ENCODE measurements at regions of chr5 and their contacts with region 1.

Region 1: GRCh38 chr5:169701910-169702451 is 64.9 kb downstream of the DOCK2 start:
- DNase-seq: no peak
- H3K4me3 ChIP-seq: no peak overlapping the region
- H3K27ac ChIP-seq: peak overlapping the region in 1 of 59 donors; percentile 59
- H3K27me3 ChIP-seq: peaks cover 0 to 3% (median 0%) of the 10 kb centered on the region in 45 donors
- CTCF ChIP-seq: peak in 55 of 56 donors; percentile 17 to 84 (median 66)

Region 2: DNA sequence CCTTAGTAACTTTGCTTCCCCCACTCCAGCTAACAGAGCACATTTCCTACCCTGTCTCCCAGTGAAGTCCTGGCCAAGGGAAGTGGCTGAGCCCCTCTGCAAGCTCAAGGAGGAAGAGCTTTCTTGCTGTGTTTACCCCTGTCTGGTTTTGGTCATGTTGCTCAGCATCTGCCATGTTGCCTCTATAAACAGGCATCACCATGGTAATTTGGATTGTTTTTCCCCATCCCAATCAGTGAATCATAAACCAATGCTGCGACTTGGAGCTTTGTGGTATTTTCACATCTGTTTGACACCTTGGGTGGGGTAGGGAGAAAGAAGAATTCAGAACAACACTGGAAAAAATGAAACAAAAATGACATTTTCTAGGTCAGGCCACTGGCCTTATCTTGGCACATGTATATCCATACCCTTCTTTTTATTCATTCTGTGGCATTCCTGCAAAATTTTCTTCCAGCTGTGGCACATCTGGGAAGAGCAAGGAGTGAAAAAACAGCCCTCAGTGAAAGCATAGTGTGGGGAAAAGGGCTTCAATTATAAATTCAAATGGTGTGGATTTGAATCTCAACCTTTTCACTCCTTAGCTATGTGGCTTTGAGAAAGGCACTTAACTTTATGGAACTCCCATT is 443.5 kb before region 1 on chr5:
- intact Hi-C with region 1: no loop called
- DNase-seq: no peak
- H3K4me3 ChIP-seq: no peak overlapping the region
- H3K27ac ChIP-seq: no peak overlapping the region
- H3K27me3 ChIP-seq: peaks cover 0 to 5% (median 0%) of the 10 kb centered on the region in 45 donors
- CTCF ChIP-seq: no peak

Region 3: GRCh38 chr5:169367861-169368260 is 334.1 kb before region 1 on chr5:
- intact Hi-C with region 1: no loop called
- DNase-seq: no peak
- H3K4me3 ChIP-seq: no peak overlapping the region
- H3K27ac ChIP-seq: no peak overlapping the region
- H3K27me3 ChIP-seq: peaks cover 0 to 14% (median 0%) of the 10 kb centered on the region in 45 donors
- CTCF ChIP-seq: no peak

Region 4: DNA sequence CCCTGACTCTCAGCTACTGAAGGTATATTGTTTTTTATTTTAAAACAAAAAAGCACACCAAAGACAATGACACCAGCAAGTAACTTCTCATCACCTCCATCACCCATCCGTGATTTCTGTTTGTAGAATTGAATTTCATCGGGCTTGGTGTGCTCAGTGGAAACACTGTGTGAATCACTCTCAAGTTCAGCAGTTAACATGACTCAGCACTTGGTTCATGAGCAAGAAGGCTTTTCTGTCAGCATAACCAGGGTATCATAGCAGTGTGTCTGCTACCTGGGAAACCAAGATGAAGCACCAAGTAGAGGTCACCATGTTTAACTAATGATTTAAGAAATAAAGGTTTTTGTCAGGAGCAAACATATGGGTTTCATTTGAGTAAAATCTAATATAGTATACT is 154.6 kb after region 1 on chr5:
- intact Hi-C with region 1: no loop called
- DNase-seq: no peak
- H3K4me3 ChIP-seq: no peak overlapping the region
- H3K27ac ChIP-seq: no peak overlapping the region
- H3K27me3 ChIP-seq: no peaks in the 10 kb centered on the region
- CTCF ChIP-seq: no peak

Region 5: DNA sequence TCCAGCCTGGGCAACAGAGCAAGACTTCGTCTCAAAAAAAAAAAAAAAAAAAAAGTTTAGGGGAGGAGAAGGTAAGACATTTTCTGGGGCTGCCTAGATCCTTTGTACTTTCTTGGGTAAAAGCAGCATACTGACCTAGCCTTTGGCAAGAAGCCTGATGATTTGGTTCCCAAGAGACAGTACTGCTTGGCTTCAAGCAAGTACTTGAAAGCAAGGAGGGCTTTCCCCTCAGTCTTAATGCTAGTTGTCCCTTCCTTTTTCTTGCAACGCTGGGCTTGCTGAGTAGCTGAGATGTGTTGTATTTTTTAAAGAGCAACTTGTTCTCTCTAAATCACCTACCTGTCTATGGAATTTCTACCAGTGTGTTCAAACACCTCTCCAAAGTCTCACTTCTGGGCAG is 202.1 kb after region 1 on chr5:
- intact Hi-C with region 1: loop called in 1 of 2 experiments (anchors 10 kb)
- DNase-seq: no peak
- H3K4me3 ChIP-seq: no peak overlapping the region
- H3K27ac ChIP-seq: peak overlapping the region in 8 of 59 donors; percentile 4 to 70 (median 51)
- H3K27me3 ChIP-seq: no peaks in the 10 kb centered on the region
- CTCF ChIP-seq: no peak

Region 6: GRCh38 chr5:170070556-170071412 is 368.8 kb after region 1 on chr5:
- intact Hi-C with region 1: loop called (anchors 2 to 10 kb)
- DNase-seq: peak in 7 of 10 donors; percentile 17 to 67 (median 56)
- H3K4me3 ChIP-seq: no peak overlapping the region
- H3K27ac ChIP-seq: peak overlapping the region in 19 of 59 donors; percentile 0 to 54 (median 42)
- H3K27me3 ChIP-seq: no peaks in the 10 kb centered on the region
- CTCF ChIP-seq: peak; percentile 22 to 78 (median 66)

Region 7: DNA sequence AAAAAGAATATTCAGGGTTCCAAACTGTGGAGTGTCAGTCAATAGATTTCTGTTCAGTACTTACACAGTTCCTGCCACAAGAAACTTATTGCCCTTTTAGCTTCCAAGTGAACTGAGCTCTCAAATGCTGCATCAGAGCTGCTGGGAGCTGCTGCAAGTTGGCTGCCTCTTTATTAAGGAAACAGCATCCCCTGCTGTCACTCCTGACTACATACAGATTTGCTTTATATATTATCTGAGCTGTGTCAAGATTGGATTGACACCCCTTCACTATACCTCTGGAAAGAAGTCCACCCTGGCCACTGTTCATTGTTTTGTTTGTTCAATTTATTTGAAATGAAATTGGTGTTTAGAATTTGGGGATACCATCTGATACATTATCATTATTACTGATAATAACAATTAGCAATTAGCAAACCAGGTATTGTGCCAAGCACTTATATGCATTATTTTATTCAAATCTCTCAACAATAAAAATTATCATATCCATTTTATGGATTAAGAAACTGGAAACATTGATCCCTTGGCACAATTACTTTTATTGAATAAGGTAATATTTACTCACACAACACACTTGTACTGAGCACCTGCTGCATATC is 514.4 kb after region 1 on chr5:
- intact Hi-C with region 1: loop called in 1 of 2 experiments (anchors 10 kb)
- DNase-seq: peak in 1 of 10 donors; percentile 48
- H3K4me3 ChIP-seq: no peak overlapping the region
- H3K27ac ChIP-seq: no peak overlapping the region
- H3K27me3 ChIP-seq: peaks cover 0 to 12% (median 0%) of the 10 kb centered on the region in 45 donors
- CTCF ChIP-seq: peak in 55 of 56 donors; percentile 31 to 74 (median 59)